ENCODE measurements at regions of chr7 and their contacts with region 1.

Region 1: GRCh38 chr7:12067141-12067831 is 143.8 kb upstream of the TMEM106B start:
- DNase-seq: peak; percentile 58
- ATAC-seq: peak; percentile 71
- H3K4me3 ChIP-seq: peak overlapping the region in 1 of 2 experiments; percentile 20; a peak in 1 of 4 replicates
- H3K27ac ChIP-seq: no peak overlapping the region
- H3K4me1 ChIP-seq: peaks cover 0 to 31% of the 10 kb centered on the region in 2 experiments; a peak in 2 of 4 replicates
- H3K27me3 ChIP-seq: no peaks in the 10 kb centered on the region
- CTCF ChIP-seq: peak; percentile 65 to 74 (median 68)
- POLR2A ChIP-seq: no peak
- RAD21 ChIP-seq: peak; percentile 89

Region 2: DNA sequence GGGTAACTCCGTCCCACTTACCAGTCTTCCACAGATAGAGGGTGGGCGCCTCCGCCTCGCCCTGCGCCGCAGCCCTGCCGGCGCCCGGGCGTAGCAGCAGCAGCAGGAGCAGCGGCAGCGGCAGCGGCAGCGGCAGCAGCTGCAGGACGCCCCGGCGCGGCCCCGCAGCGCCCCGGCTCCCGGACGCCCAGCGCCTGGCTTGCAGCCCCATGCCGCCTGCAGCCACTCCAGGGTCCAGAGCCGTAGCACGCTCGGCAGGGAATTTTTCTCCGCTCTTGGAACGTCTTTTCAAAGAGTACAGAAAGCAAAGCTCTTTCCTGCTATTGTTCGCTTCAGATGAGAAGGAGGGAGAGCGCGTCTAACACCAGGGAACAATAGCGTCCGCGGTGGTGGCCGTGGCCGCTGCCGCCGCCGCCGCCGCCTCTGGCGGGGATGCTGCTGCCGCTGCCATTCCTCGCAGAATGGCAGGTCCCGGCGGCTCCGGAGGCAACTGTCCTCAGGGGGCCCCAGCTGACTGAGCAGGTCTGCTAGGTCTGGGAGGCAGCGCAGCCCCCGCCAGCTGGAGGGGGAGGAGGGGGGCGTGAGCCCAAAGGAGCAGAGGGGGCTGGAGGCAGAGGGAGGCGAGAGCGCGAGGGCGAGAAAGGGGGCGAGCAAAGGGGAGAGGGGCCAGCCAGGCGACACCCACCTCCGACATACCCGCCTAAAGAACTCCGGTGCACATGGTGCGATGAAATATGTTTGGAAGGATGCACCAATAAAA is 235.4 kb before region 1 on chr7 and contains the start of gene THSD7A:
- CTCF ChIA-PET with region 1: no interaction called
- POLR2A ChIA-PET with region 1: no interaction called
- RAD21 ChIA-PET with region 1: no interaction called
- intact Hi-C with region 1: loop called (anchors 2 kb)
- DNase-seq: no peak
- ATAC-seq: peak; percentile 90
- H3K4me3 ChIP-seq: peak within 1 kb of the TSS; percentile 50 to 71
- H3K27ac ChIP-seq: no peak within 1 kb of the TSS
- H3K4me1 ChIP-seq: peaks cover 0 to 15% of the 10 kb centered on the region in 2 experiments; a peak in 1 of 4 replicates
- H3K27me3 ChIP-seq: no peaks in the 10 kb centered on the region
- CTCF ChIP-seq: peak in 1 of 3 experiments; percentile 13; a peak in 1 of 6 replicates
- POLR2A ChIP-seq: no peak
- RAD21 ChIP-seq: peak; percentile 19
- total RNA-seq, gene THSD7A: 0.05 TPM

Region 3: DNA sequence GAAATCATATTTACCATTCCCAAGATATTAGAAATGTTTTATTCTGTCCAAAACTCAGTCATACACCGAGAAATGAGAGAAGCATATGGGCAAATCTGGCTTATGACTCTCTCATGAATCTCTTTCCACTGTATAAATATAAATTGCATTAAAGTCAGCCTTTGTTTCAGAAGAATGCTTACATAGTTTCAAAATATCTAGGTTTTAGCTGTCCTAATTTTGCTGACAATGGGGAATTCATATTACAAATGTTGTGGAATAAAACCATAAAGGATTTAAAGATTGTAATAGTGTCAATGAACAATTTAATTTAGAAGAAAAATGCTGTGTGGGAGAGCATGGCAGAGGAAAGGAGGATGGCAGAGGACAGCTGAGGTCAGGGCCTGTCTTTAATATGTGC is 50.2 kb before region 1 on chr7:
- CTCF ChIA-PET with region 1: no interaction called
- POLR2A ChIA-PET with region 1: no interaction called
- RAD21 ChIA-PET with region 1: no interaction called
- intact Hi-C with region 1: no loop called
- DNase-seq: no peak
- ATAC-seq: no peak
- H3K4me3 ChIP-seq: no peak overlapping the region
- H3K27ac ChIP-seq: no peak overlapping the region
- H3K4me1 ChIP-seq: no peaks in the 10 kb centered on the region
- H3K27me3 ChIP-seq: no peaks in the 10 kb centered on the region
- CTCF ChIP-seq: no peak
- POLR2A ChIP-seq: no peak
- RAD21 ChIP-seq: no peak

Region 4: DNA sequence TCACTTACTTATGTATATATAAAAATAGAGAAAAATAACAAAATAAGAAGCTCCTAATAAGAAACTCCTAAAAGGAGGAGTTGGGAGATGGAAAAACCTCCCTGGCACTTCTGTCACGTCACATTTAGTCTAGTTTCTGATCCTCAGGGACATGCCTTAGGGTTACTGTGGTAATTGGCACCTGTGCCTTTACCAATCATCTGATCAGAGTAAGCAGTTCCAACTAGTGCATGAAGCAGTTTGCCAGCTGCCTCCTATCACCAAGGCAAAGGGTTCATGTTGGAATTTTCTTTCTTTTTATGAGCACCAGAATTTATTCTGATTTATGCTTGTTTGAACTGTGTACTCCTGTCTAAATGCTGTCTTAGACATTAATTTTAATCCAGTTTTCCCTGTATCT is 670.1 kb after region 1 on chr7:
- CTCF ChIA-PET with region 1: no interaction called
- POLR2A ChIA-PET with region 1: no interaction called
- RAD21 ChIA-PET with region 1: no interaction called
- intact Hi-C with region 1: no loop called
- DNase-seq: no peak
- ATAC-seq: no peak
- H3K4me3 ChIP-seq: no peak overlapping the region
- H3K27ac ChIP-seq: no peak overlapping the region
- H3K4me1 ChIP-seq: no peaks in the 10 kb centered on the region
- H3K27me3 ChIP-seq: no peaks in the 10 kb centered on the region
- CTCF ChIP-seq: no peak
- POLR2A ChIP-seq: no peak
- RAD21 ChIP-seq: no peak

Measured in HCT116 (cell line).